Sigmoid colon (tissue), 7 donors: ENCODE measurements at regions of chrX and their contacts with region 1.

Region 1: GRCh38 chrX:63350941-63351616 is at the start of gene SPIN4:
- DNase-seq: peak; percentile 90
- H3K4me3 ChIP-seq: peak within 1 kb of the TSS; percentile 46 to 62 (median 61)
- H3K27ac ChIP-seq: peak within 1 kb of the TSS; percentile 76 to 87 (median 83)
- H3K4me1 ChIP-seq: peaks cover 0 to 4% (median 0%) of the 10 kb centered on the region in 4 donors
- H3K27me3 ChIP-seq: no peaks in the 10 kb centered on the region
- CTCF ChIP-seq: no peak
- EP300 ChIP-seq: no peak
- POLR2A ChIP-seq: peak; percentile 42 to 47
- total RNA-seq, gene SPIN4: 4.8 to 7.6 (median 6.5) TPM

Region 2: DNA sequence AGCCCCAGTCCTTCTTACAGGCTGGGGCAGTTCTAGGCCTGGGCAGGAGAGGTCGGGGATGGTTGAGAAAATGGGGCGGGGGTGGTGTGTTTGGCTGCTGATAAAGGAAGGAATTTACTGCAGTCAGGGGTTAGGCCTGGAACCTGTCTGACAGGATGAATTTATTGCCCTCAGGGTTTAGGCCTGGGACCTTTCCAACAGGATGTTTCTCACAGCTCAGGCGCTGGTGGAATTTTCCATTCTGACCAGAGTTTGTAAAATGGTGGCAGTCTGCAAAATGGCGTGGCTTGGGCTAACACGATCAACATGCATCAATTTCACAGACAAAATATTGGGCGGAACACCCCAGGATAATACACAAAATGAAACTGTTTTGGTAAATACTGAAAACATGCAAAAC is 83.6 kb after region 1 on chrX:
- intact Hi-C with region 1: loop called (anchors 10 kb)
- DNase-seq: no peak
- H3K4me3 ChIP-seq: no peak overlapping the region
- H3K27ac ChIP-seq: peak overlapping the region in 2 of 4 donors; percentile 37 to 43
- H3K4me1 ChIP-seq: peaks cover 0 to 6% (median 0%) of the 10 kb centered on the region in 4 donors
- H3K27me3 ChIP-seq: no peaks in the 10 kb centered on the region
- CTCF ChIP-seq: no peak
- EP300 ChIP-seq: no peak
- POLR2A ChIP-seq: no peak

Region 3: GRCh38 chrX:63506320-63506719 is 155.2 kb after region 1 on chrX:
- intact Hi-C with region 1: loop called (anchors 10 kb)
- DNase-seq: no peak
- H3K4me3 ChIP-seq: no peak overlapping the region
- H3K27ac ChIP-seq: no peak overlapping the region
- H3K4me1 ChIP-seq: peaks cover 0 to 14% (median 2%) of the 10 kb centered on the region in 4 donors
- H3K27me3 ChIP-seq: no peaks in the 10 kb centered on the region
- CTCF ChIP-seq: peak in 1 of 4 experiments; percentile 17
- EP300 ChIP-seq: no peak
- POLR2A ChIP-seq: no peak

Region 4: GRCh38 chrX:63560601-63561218 is 209.6 kb after region 1 on chrX:
- intact Hi-C with region 1: loop called (anchors 5 kb)
- DNase-seq: peak; percentile 74
- H3K4me3 ChIP-seq: peak overlapping the region; percentile 50 to 69 (median 57)
- H3K27ac ChIP-seq: peak overlapping the region; percentile 74 to 88 (median 80)
- H3K4me1 ChIP-seq: peaks cover 0 to 17% (median 2%) of the 10 kb centered on the region in 4 donors
- H3K27me3 ChIP-seq: no peaks in the 10 kb centered on the region
- CTCF ChIP-seq: no peak
- EP300 ChIP-seq: no peak
- POLR2A ChIP-seq: peak in 1 of 2 donors; percentile 37